Heart right ventricle (tissue), 16 donors: ENCODE measurements at regions of chr13 and their contacts with region 1.

Region 1: DNA sequence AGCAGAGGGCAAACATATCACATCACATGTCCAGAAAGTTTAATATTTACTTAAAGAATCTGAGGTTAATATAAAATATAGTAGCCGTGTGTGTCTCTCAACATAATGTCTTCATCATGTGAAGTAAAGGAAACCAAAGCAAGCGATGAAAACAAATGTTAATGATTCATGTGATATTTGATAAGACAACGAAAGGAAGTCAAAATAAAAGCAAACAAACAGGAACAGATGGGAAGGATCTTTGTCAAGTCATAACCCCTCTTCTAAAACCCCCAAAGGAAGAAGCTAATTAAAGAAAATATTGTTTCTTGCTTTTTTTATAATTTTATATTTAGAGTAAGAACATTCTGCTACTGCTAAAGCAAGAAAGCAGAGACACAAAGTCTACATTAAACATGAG is 418.8 kb downstream of the DACH1 start:
- DNase-seq: no peak
- ATAC-seq: peak in 4 of 8 donors; percentile 16 to 34 (median 30)
- H3K4me3 ChIP-seq: no peak overlapping the region
- H3K27ac ChIP-seq: peak overlapping the region in 1 of 10 donors; percentile 41
- H3K4me1 ChIP-seq: peaks cover 0 to 13% (median 0%) of the 10 kb centered on the region in 9 donors
- H3K27me3 ChIP-seq: no peaks in the 10 kb centered on the region
- CTCF ChIP-seq: no peak

Region 2: GRCh38 chr13:71290963-71291841 is 157.0 kb before region 1 on chr13:
- intact Hi-C with region 1: loop called in 1 of 10 experiments (anchors 10 kb)
- DNase-seq: peak in 1 of 2 donors; percentile 55
- ATAC-seq: peak in 6 of 8 donors; percentile 42 to 74 (median 69)
- H3K4me3 ChIP-seq: peak overlapping the region; percentile 10 to 58 (median 50)
- H3K27ac ChIP-seq: peak overlapping the region; percentile 11 to 80 (median 58)
- H3K4me1 ChIP-seq: peaks cover 0 to 11% (median 3%) of the 10 kb centered on the region in 9 donors
- H3K27me3 ChIP-seq: no peaks in the 10 kb centered on the region
- CTCF ChIP-seq: no peak

Region 3: DNA sequence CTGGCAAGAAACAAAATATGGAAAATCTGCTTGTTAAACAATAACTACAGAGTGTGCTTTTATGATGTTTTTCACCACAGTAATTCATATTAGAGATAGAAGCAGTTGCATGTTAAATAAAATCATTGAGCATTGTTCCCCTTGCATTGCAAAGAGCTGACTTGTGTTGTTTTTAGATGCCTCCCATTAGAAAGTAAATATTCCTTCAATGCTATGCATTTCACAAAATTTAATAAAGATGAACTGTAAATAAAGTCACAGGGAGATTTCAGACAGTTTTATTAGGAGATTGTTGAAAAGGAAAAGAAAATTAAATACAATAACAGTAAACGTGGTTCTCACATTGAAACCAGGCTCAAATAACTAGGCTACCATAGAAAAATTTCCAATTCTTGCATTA is 10.5 kb before region 1 on chr13:
- intact Hi-C with region 1: loop called in 1 of 10 experiments (anchors 2 kb)
- DNase-seq: no peak
- ATAC-seq: no peak
- H3K4me3 ChIP-seq: no peak overlapping the region
- H3K27ac ChIP-seq: no peak overlapping the region
- H3K4me1 ChIP-seq: no peaks in the 10 kb centered on the region
- H3K27me3 ChIP-seq: no peaks in the 10 kb centered on the region
- CTCF ChIP-seq: no peak